ENCODE measurements at regions of chr1 and their contacts with region 1.

Region 1: DNA sequence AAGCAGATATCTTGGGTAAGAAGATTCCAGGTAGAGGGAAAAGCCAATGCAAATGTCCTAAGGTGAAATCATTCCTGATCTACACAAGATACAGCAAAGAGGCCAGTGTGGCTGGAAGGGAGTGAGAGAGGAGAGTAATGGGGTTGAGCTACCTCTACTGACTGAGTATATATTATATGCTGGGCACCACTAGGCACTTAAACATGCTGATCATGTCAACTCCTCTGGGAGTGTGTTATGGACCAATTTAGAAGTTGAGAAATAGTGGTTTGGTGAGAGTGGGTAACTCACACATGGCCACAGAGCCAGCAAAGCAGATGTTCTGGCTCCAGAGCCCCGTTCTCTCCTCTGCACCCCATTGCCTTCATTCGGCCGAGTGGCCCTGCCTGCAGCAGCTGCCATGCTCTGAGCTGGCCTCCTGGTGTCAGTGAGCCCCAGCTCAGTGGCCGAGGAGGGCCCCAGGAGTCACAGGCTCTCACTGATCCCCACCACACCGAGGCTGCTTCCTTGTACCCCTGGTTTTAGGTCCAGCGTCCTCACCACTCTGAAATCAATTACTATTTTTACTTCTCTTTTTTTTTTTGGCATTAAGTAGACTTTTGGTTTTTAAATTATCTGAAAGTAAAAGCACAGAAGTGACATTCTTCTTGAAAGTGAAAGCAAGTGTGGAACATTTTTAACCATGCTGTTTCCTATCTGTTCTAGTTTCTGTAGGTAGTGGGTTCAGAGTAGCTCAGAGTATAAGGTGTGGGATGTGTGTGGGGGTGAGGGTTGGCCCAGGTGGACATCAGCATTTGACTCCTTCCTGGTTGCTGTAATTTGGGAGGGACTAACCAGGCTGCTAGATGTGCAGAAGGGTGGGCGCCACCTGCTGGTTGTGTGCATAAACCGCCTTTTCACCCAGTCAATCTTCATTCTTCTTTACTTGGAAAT is 45.8 kb upstream of the CRNN start:
- DNase-seq: peak; percentile 67 to 89
- ATAC-seq: peak; percentile 71 to 75 (median 74)
- H3K4me3 ChIP-seq: no peak overlapping the region
- H3K4me3 Mint-ChIP-seq: peak overlapping the region; percentile 83
- H3K27ac ChIP-seq: peak overlapping the region; percentile 71
- H3K27ac Mint-ChIP-seq: peak overlapping the region; percentile 94 to 95
- H3K4me1 ChIP-seq: peaks cover 13% of the 10 kb centered on the region
- H3K4me1 Mint-ChIP-seq: peaks cover 26 to 33% of the 10 kb centered on the region in 2 donors
- H3K27me3 ChIP-seq: no peaks in the 10 kb centered on the region
- H3K27me3 Mint-ChIP-seq: peaks cover 3 to 5% of the 10 kb centered on the region in 2 donors
- CTCF ChIP-seq: peak; percentile 80

Region 2: DNA sequence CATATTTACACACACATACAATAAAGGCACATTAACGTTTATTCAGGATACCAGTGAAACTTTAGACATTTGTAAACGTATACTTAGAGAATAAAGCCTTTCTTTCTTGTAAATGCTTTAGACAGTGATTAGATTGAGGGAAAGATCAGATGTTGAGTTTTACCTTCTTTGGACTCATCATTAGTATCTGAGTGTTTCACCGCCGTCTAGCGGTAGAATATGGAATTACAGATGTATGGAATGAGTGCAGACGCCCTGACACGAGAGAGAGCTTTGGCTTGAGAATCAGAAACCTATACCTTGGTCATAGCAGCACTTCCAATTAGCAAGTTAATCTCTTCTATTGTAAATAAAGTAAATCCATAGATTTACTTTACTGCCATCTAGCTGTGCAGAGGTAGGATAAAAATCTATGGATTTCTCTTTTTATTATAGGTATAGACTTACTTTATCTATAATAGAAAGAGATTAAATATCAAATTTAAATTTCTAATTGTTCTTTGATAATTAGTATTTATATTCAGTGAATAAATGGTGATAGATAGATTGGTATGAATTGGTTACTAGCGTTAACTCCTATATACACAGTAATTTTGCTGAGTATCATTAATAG is 112.6 kb before region 1 on chr1:
- intact Hi-C with region 1: loop called (anchors 1 kb)
- DNase-seq: peak in 1 of 2 donors; percentile 80
- ATAC-seq: peak; percentile 66 to 80 (median 76)
- H3K4me3 ChIP-seq: no peak overlapping the region
- H3K4me3 Mint-ChIP-seq: no peak overlapping the region
- H3K27ac ChIP-seq: no peak overlapping the region
- H3K27ac Mint-ChIP-seq: no peak overlapping the region
- H3K4me1 ChIP-seq: no peaks in the 10 kb centered on the region
- H3K4me1 Mint-ChIP-seq: no peaks in the 10 kb centered on the region
- H3K27me3 ChIP-seq: peaks cover 10% of the 10 kb centered on the region
- H3K27me3 Mint-ChIP-seq: peaks cover 6 to 45% of the 10 kb centered on the region in 2 donors
- CTCF ChIP-seq: peak; percentile 96

Region 3: GRCh38 chr1:152440635-152441471 is 19.0 kb before region 1 on chr1:
- intact Hi-C with region 1: loop called (anchors 2 kb)
- DNase-seq: peak; percentile 47 to 85
- ATAC-seq: peak; percentile 87 to 100 (median 99)
- H3K4me3 ChIP-seq: no peak overlapping the region
- H3K4me3 Mint-ChIP-seq: no peak overlapping the region
- H3K27ac ChIP-seq: no peak overlapping the region
- H3K27ac Mint-ChIP-seq: no peak overlapping the region
- H3K4me1 ChIP-seq: peaks cover 5% of the 10 kb centered on the region
- H3K4me1 Mint-ChIP-seq: no peaks in the 10 kb centered on the region
- H3K27me3 ChIP-seq: peaks cover 5% of the 10 kb centered on the region
- H3K27me3 Mint-ChIP-seq: peaks cover 29 to 35% of the 10 kb centered on the region in 2 donors
- CTCF ChIP-seq: peak; percentile 85

Measured in natural killer cell (primary cell).